T-cell (primary cell): ENCODE measurements at regions of chr17 and their contacts with region 1.

Region 1: DNA sequence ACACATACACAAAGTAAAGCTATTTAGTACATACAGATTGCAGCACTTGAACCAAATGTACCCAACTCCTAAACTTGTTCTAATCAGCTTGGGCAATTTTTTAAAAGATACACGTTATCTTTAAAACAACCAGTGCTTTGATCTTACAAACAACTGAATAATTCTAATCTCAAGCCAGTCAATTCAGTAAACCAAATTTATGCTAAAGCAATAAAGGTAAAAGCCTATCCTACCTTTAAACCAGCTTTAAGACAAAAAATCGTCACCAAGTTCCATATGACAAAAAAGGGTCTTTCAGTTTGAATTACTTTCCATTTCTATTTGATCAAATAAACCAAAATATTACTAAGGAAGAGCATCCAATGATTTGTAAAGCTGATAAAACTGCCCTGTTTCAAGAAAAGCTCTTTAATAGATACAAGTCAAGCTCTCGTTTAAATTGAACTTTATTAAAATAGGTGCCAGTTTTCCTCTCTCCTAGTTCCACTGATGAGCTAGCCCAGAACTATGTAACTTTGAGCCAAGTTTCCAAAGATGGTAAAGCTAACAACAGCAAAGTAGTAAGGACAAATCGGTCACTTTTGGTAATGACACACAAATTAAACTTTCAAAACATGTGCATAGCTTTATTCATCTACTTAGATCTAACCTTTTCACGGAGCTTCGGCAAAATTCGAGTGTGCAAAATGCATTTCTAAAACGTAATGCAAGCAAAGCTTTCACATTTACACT is 10.2 kb downstream of the CRYBA1 start:
- DNase-seq: no peak
- ATAC-seq: no peak
- H3K4me3 ChIP-seq: no peak overlapping the region
- H3K4me3 Mint-ChIP-seq: no peak overlapping the region
- H3K27ac ChIP-seq: no peak overlapping the region
- H3K27ac Mint-ChIP-seq: peak overlapping the region; percentile 13 to 57
- H3K4me1 ChIP-seq: no peaks in the 10 kb centered on the region
- H3K4me1 Mint-ChIP-seq: peaks cover 31 to 40% (median 34%) of the 10 kb centered on the region in 3 donors
- H3K27me3 ChIP-seq: no peaks in the 10 kb centered on the region
- H3K27me3 Mint-ChIP-seq: no peaks in the 10 kb centered on the region

Region 2: DNA sequence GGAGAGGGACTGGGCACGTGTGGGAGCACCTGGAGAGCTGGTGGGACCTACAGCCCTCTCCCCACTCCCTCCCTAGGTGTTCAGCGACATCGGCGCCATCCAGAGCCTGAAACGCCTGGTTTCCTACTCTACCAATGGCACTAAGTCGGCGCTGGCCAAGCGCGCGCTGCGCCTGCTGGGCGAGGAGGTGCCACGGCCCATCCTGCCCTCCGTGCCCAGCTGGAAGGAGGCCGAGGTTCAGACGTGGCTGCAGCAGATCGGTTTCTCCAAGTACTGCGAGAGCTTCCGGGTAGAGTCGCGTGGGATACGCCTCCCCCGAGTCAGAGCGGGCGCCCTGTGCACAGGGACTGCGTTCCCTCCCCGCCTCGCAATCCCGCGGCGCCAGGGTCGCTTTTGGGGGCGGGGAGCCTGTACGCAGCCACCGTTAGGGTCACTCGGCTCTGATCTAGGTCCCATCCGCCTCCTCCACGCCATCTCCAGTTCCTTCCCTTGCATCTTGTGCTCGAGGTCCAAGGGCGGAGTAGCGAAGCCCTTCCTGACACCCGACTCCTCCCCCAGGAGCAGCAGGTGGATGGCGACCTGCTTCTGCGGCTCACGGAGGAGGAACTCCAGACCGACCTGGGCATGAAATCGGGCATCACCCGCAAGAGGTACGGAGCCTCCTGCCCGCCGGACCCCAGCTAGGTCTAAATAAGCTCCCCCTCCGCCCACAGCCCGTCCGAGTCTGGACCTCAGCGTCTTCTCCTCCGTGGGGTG is 872.4 kb before region 1 on chr17:
- CTCF ChIA-PET with region 1: no interaction called
- POLR2A ChIA-PET with region 1: no interaction called
- DNase-seq: peak; percentile 36 to 69 (median 52)
- ATAC-seq: peak; percentile 90 to 94 (median 93)
- H3K4me3 ChIP-seq: peak overlapping the region; percentile 87 to 96
- H3K4me3 Mint-ChIP-seq: peak overlapping the region; percentile 88 to 91 (median 89)
- H3K27ac ChIP-seq: peak overlapping the region; percentile 45
- H3K27ac Mint-ChIP-seq: peak overlapping the region; percentile 69 to 81
- H3K4me1 ChIP-seq: peaks cover 2 to 29% of the 10 kb centered on the region in 2 experiments
- H3K4me1 Mint-ChIP-seq: peaks cover 29 to 45% (median 45%) of the 10 kb centered on the region in 3 donors
- H3K27me3 ChIP-seq: peaks cover 10 to 11% of the 10 kb centered on the region in 2 experiments
- H3K27me3 Mint-ChIP-seq: peaks cover 4 to 6% of the 10 kb centered on the region in 2 donors

Region 3: DNA sequence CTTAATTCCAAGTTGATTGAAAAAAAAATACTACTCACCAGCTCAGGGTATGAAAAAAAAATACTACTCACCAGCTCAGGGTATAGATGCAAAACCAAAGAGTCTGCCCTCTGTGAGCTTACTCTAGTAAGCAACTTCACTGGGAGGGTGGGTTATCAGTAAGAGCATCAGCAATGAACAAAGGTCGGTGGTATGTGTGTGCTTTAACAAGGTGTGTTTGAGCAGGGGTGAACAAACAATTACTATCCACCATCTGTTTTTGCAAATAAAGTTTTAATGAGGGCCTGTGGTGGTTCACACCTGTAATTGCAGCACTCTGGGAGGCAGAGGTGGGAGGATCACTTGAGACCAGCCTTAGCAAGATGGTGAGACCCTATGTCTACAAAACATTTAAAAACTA is 17.0 kb after region 1 on chr17:
- CTCF ChIA-PET with region 1: interaction called, 5 to 11 read pairs
- POLR2A ChIA-PET with region 1: interaction called in 1 of 2 experiments, 3 read pairs
- DNase-seq: no peak
- ATAC-seq: peak in 1 of 4 experiments; percentile 22
- H3K4me3 ChIP-seq: no peak overlapping the region
- H3K4me3 Mint-ChIP-seq: peak overlapping the region in 1 of 3 donors; percentile 9
- H3K27ac ChIP-seq: no peak overlapping the region
- H3K27ac Mint-ChIP-seq: peak overlapping the region in 1 of 2 donors; percentile 45
- H3K4me1 ChIP-seq: peaks cover 0 to 28% of the 10 kb centered on the region in 2 experiments
- H3K4me1 Mint-ChIP-seq: peaks cover 67 to 72% (median 68%) of the 10 kb centered on the region in 3 donors
- H3K27me3 ChIP-seq: no peaks in the 10 kb centered on the region
- H3K27me3 Mint-ChIP-seq: no peaks in the 10 kb centered on the region

Region 4: DNA sequence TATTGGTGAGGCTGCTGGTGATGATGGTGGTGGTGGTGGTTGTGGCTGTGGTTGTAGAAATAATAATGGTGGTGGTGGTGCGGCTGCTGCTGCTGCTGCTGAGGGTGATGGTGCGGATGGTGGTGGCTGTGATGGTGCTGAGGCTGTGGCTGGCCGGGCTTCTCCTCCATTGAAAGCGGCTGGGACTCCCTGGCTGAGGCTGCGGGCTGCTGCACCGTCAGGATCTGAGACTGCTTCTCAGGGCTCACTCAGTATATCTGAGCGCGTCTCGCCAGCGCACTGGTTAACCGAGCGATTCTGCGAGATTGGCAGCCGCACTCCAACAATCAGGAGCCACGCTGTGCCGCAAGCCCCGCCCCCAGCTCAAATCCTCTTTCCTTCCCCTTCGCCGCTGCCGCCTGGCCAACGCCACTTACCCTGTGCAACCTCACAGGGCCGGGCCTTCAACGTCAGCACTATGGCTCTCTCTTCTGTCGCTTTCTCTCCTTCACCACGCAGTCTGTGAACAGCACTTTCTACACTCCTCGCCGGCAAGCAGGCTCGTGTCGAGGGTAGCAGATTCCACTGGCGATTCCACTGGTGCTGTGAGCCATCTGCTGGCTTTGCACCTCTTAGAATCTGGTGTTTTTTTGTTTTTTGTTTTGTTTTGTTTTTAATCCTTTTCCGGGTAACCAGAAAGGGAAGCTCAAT is 37.1 kb after region 1 on chr17 and contains the start of gene NUFIP2:
- CTCF ChIA-PET with region 1: interaction called in 1 of 2 experiments, 10 read pairs
- POLR2A ChIA-PET with region 1: interaction called in 1 of 2 experiments, 3 read pairs
- DNase-seq: peak; percentile 96 to 99 (median 98)
- ATAC-seq: peak; percentile 85 to 90 (median 88)
- H3K4me3 ChIP-seq: peak within 1 kb of the TSS; percentile 78 to 98
- H3K4me3 Mint-ChIP-seq: peak within 1 kb of the TSS; percentile 99 to 100 (median 100)
- H3K27ac ChIP-seq: peak within 1 kb of the TSS; percentile 87
- H3K27ac Mint-ChIP-seq: peak within 1 kb of the TSS; percentile 100
- H3K4me1 ChIP-seq: peaks cover 22 to 34% of the 10 kb centered on the region in 2 experiments
- H3K4me1 Mint-ChIP-seq: peaks cover 40 to 51% (median 41%) of the 10 kb centered on the region in 3 donors
- H3K27me3 ChIP-seq: no peaks in the 10 kb centered on the region
- H3K27me3 Mint-ChIP-seq: no peaks in the 10 kb centered on the region
- total RNA-seq, gene NUFIP2: 60.7 to 76.2 (median 66.4) TPM